ENCODE measurements at regions of chr13 and their contacts with region 1.

Region 1: GRCh38 chr13:92074658-92075057 is 676.2 kb downstream of the GPC5 start:
- DNase-seq: peak; percentile 28 to 67 (median 64)
- H3K4me3 ChIP-seq: no peak overlapping the region
- H3K27ac ChIP-seq: no peak overlapping the region
- H3K4me1 ChIP-seq: no peaks in the 10 kb centered on the region
- H3K27me3 ChIP-seq: no peaks in the 10 kb centered on the region

Region 2: DNA sequence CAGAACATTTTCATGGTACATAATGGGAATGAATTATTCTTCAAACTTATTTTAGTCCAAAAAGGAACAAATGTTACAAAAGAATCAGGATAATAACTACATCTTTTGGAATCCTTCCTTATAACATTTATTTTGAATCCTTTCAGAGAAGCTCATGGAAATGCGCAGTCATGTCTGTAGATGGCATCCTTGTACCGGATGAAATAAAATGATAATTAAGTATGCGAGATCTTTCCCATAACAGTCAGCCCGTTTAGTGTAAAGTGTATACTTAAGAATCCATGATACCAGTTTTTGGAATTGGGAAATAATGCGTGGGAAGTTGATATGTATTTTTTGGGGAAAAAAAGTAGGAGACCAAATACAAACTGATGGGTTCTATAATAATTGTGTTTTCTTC is 257.4 kb before region 1 on chr13:
- CTCF ChIA-PET with region 1: interaction called, 15 read pairs
- POLR2A ChIA-PET with region 1: no interaction called
- DNase-seq: peak in 2 of 3 donors; percentile 27 to 36
- H3K4me3 ChIP-seq: no peak overlapping the region
- H3K27ac ChIP-seq: no peak overlapping the region
- H3K4me1 ChIP-seq: peaks cover 0 to 19% (median 5%) of the 10 kb centered on the region in 4 experiments
- H3K27me3 ChIP-seq: no peaks in the 10 kb centered on the region

Region 3: GRCh38 chr13:92187378-92187989 is 112.8 kb after region 1 on chr13:
- CTCF ChIA-PET with region 1: no interaction called
- POLR2A ChIA-PET with region 1: no interaction called
- DNase-seq: peak; percentile 23 to 55 (median 47)
- H3K4me3 ChIP-seq: no peak overlapping the region
- H3K27ac ChIP-seq: no peak overlapping the region
- H3K4me1 ChIP-seq: no peaks in the 10 kb centered on the region
- H3K27me3 ChIP-seq: no peaks in the 10 kb centered on the region